Dendritic cell treated with granulocyte-macrophage colony-stimulating factor and Interleukin-4, amounts not matched to agents 40 ng/mL and 50 ng/mL, for 4 days (primary cell): ENCODE measurements at regions of chr5 and their contacts with region 1.

Region 1: GRCh38 chr5:135887351-135887864 is 8.2 kb downstream of the IL9 start:
- H3K4me3 Mint-ChIP-seq: no peak overlapping the region
- H3K27ac Mint-ChIP-seq: no peak overlapping the region
- H3K4me1 Mint-ChIP-seq: peaks cover 34% of the 10 kb centered on the region
- H3K27me3 Mint-ChIP-seq: peaks cover 48% of the 10 kb centered on the region

Region 2: DNA sequence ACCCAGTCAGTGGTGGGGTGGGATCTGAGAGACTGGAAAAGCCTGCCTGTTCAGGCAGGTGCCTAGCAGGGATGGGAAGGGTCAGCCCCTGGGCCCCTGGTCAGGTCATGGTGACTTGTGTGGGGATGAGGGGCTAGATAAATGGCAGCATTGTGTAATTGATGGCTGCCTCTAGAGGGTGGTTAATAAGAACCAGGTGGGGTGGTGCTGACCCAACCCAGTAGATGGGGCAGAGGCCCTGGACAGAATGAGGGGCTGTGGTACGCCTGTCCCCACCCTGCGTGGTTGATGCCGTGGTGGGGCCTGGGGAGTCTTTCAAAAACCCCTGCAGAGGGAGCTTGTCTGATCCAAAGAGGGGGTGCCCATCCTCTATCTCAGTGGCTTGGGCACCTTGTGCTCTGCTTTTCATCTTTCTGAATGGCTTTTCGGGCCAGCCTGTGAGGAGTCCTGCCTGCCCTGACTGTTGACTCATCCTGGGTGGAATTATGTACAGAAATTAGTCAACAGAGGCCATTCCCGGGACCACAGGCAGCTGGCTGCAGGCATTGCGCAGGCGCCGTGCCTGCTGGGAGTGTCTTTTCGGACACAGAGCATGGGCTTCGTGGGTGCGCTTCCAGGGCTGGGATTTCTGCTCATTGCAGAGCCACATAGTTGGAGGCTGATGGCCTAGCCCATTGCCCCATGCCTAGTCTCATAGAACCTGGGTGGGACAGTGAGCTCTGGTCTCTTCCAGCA is 759.7 kb before region 1 on chr5:
- intact Hi-C with region 1: no loop called
- H3K4me3 Mint-ChIP-seq: no peak overlapping the region
- H3K27ac Mint-ChIP-seq: no peak overlapping the region
- H3K4me1 Mint-ChIP-seq: peaks cover 25% of the 10 kb centered on the region
- H3K27me3 Mint-ChIP-seq: peaks cover 31% of the 10 kb centered on the region

Region 3: DNA sequence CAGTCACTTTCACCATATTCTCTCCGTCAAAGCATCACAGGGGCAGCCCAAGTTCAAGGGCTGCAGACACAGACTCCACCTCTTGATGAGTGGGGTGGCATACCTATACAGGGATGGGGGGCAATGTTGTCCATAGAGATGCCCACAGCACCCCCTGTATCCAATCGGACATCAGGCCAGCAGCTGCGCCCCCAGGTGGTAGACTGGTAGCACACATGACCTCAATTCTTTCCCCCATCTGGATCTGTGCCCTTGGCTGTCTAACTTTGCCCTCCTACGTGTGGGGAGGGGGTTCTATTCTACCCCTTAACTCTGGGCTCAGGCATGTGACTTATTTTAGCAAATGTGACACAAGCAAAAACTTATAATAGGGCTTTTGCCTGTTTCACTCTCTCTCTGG is 136.9 kb before region 1 on chr5:
- intact Hi-C with region 1: loop called (anchors 5 kb)
- H3K4me3 Mint-ChIP-seq: no peak overlapping the region
- H3K27ac Mint-ChIP-seq: no peak overlapping the region
- H3K4me1 Mint-ChIP-seq: no peaks in the 10 kb centered on the region
- H3K27me3 Mint-ChIP-seq: peaks cover 12% of the 10 kb centered on the region

Region 4: GRCh38 chr5:135829681-135830383 is 57.6 kb before region 1 on chr5:
- intact Hi-C with region 1: loop called (anchors 5 kb)
- H3K4me3 Mint-ChIP-seq: no peak overlapping the region
- H3K27ac Mint-ChIP-seq: peak overlapping the region; percentile 9
- H3K4me1 Mint-ChIP-seq: peaks cover 37% of the 10 kb centered on the region
- H3K27me3 Mint-ChIP-seq: peaks cover 66% of the 10 kb centered on the region

Region 5: DNA sequence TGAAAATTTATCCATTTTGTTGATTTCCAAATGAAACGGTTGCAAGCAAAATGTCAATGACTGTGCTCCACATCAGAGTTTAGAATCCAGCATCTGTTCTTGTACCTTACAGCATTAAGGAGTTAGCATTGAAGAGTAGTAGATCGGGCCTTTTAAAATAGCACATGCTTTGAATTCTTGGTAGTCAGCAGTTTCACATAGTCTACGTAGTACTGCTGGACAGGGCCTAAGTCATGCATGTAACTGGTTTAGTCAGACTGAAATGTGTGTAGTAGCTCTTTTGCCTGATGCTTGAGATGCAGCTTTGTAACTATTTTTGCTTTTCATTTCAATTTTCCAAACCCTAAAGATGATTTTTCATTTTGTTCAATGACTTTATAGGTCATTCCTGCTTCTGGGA is 47.5 kb after region 1 on chr5:
- intact Hi-C with region 1: loop called (anchors 5 kb)
- H3K4me3 Mint-ChIP-seq: no peak overlapping the region
- H3K27ac Mint-ChIP-seq: no peak overlapping the region
- H3K4me1 Mint-ChIP-seq: peaks cover 5% of the 10 kb centered on the region
- H3K27me3 Mint-ChIP-seq: peaks cover 54% of the 10 kb centered on the region

Region 6: GRCh38 chr5:136080483-136081216 is 193.2 kb after region 1 on chr5:
- intact Hi-C with region 1: loop called (anchors 5 kb)
- H3K4me3 Mint-ChIP-seq: peak overlapping the region; percentile 53
- H3K27ac Mint-ChIP-seq: peak overlapping the region; percentile 34
- H3K4me1 Mint-ChIP-seq: peaks cover 26% of the 10 kb centered on the region
- H3K27me3 Mint-ChIP-seq: peaks cover 55% of the 10 kb centered on the region

Region 7: DNA sequence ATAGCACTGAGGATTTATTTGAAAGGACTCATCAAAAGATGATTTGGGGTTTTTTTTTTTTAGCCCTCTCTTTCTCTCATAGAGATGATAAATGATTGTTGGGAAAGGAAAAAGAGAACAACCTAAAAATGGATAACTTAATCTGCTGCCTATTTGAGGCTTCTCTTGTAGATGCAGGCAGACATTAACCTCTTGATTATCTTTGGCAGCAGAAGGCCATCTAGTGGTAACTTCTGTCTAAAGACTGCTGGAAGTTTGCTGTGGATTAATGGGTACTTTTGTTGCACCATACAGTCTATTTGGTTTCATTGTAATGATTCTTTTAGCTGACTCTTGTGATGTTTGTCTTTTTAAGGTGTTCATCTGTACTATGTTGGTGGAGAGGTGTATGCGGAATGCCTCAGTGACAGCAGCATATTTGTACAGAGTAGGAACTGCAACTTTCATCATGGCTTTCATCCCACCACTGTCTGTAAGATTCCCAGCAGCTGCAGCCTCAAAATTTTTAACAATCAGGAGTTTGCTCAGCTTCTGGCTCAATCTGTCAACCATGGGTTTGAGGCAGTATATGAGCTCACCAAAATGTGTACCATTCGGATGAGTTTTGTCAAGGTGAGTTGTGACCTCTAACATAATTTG is 286.7 kb after region 1 on chr5:
- intact Hi-C with region 1: loop called (anchors 5 kb)
- H3K4me3 Mint-ChIP-seq: no peak overlapping the region
- H3K27ac Mint-ChIP-seq: no peak overlapping the region
- H3K4me1 Mint-ChIP-seq: peaks cover under 1% of the 10 kb centered on the region
- H3K27me3 Mint-ChIP-seq: no peaks in the 10 kb centered on the region

Region 8: DNA sequence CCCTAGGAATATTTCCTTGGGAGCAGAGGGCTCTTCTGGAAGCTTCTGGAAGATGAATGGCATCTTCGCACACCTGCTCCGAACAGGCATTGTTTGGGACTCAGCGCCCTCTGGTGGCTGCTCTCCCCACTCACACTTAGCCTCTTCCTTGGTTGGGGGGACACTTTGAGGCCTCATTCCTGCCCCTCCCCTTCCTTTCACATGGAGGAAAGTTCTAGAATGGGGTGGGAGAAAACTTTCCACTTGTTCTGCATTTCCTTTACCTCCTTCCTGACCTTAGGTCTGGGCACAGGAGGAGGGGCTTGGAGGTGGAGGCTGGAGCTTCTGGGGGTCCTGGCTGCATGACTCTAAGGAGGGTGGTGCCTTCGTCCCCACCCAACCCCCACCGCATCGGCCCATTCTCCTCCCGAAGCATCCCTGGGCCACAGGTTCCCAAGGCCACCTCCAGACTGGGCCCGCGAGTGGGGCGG is 324.9 kb after region 1 on chr5:
- intact Hi-C with region 1: loop called (anchors 1 kb)
- H3K4me3 Mint-ChIP-seq: no peak overlapping the region
- H3K27ac Mint-ChIP-seq: no peak overlapping the region
- H3K4me1 Mint-ChIP-seq: no peaks in the 10 kb centered on the region
- H3K27me3 Mint-ChIP-seq: peaks cover 23% of the 10 kb centered on the region